ENCODE measurements at regions of chrX and their contacts with region 1.

Region 1: GRCh38 chrX:86023811-86024210 is 23.5 kb downstream of the CHM start:
- DNase-seq: no peak
- ATAC-seq: no peak
- H3K4me3 ChIP-seq: no peak overlapping the region
- H3K27ac ChIP-seq: no peak overlapping the region
- H3K4me1 ChIP-seq: no peaks in the 10 kb centered on the region
- H3K27me3 ChIP-seq: no peaks in the 10 kb centered on the region
- CTCF ChIP-seq: no peak

Region 2: DNA sequence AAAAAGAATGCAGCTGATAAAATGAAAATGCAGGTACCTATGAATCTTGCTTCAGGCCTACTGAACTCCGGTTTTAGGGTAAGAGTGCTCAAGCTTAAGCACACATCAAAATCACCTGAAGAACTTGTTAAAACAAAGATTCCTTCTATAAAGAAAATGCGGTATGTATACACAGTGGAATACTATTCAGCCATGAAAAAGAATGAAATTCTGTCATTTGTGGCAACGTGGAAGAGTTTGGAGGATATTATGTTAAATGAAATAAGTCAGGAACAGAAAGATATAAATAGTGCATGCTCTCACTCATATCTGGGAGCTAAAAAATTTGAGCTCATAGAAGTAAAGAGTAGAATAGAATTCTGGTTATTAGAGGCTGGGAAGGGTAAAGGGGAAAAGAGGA is 37.6 kb after region 1 on chrX:
- CTCF ChIA-PET with region 1: no interaction called
- POLR2A ChIA-PET with region 1: interaction called, 12 read pairs
- in situ Hi-C with region 1: no loop called
- intact Hi-C with region 1: no loop called
- DNase-seq: no peak
- ATAC-seq: no peak
- H3K4me3 ChIP-seq: no peak overlapping the region
- H3K27ac ChIP-seq: no peak overlapping the region
- H3K4me1 ChIP-seq: no peaks in the 10 kb centered on the region
- H3K27me3 ChIP-seq: no peaks in the 10 kb centered on the region; the same call in 1 of the 2 replicates
- CTCF ChIP-seq: no peak

Region 3: DNA sequence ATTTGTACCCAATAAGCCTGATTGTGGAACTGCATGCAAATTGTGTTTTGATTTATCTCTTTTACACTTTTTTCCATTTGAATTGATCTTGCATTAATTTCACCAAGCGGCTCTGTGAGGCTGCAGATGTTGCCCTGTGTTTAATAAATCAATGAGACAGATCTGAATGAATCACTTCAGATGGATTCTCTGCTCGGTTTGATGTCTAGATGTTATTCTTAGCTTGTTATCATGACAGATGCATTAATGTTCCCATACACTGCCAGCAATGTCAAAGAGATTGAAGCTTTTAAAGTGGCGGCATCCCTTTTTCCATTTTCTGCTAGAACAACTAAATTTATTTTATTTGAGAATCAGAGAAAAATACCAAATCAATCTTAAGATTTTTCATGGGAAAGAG is 130.7 kb after region 1 on chrX:
- CTCF ChIA-PET with region 1: no interaction called
- POLR2A ChIA-PET with region 1: no interaction called
- in situ Hi-C with region 1: no loop called
- intact Hi-C with region 1: no loop called
- DNase-seq: no peak
- ATAC-seq: no peak
- H3K4me3 ChIP-seq: no peak overlapping the region
- H3K27ac ChIP-seq: no peak overlapping the region
- H3K4me1 ChIP-seq: no peaks in the 10 kb centered on the region
- H3K27me3 ChIP-seq: peaks cover 7% of the 10 kb centered on the region; the same call in 1 of the 2 replicates
- CTCF ChIP-seq: no peak

Region 4: GRCh38 chrX:87078231-87078630 is 1054.4 kb after region 1 on chrX:
- CTCF ChIA-PET with region 1: no interaction called
- POLR2A ChIA-PET with region 1: interaction called, 17 read pairs
- in situ Hi-C with region 1: no loop called
- intact Hi-C with region 1: no loop called
- DNase-seq: no peak
- ATAC-seq: no peak
- H3K4me3 ChIP-seq: no peak overlapping the region
- H3K27ac ChIP-seq: no peak overlapping the region
- H3K4me1 ChIP-seq: no peaks in the 10 kb centered on the region
- H3K27me3 ChIP-seq: no peaks in the 10 kb centered on the region
- CTCF ChIP-seq: no peak